Naive thymus-derived CD4-positive, alpha-beta T cell (primary cell): ENCODE measurements at regions of chr2 and their contacts with region 1.

Region 1: DNA sequence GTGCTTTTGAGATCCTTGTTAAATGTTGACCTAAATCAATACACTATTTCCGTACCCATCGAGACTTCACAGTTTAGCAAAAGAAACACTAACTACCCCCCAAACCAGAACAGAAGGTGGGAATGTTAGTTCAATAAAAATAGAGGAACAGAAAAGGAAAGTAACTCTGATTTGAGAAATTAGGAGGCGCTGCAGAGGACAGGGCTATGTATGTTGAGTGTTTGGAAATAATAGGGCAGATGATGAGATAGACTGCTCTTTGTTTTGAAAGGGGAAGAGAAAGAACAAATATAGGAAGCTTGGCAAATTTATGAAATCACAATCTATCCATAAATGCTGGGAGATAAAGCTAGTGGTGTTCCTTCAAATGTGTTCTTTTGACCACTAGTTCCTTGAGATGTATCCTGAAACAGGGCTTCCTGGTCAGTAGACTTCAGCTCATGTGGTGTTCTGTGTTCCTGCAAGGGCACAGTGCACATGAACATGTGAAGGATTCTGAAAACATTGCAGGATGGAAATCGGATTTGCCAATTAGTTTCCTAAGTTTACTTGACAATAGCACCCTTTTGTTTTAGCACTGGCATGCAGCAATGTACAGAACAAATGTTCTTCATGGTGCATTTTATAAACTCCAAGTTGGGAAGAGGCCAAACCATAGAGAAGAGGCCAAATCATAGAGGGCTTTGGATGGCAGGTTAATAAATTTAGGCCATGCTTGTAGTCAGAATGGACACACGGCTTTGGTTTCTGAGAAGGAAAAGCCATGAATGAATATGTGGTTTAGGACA is 39.8 kb downstream of the RHBDD1 start:
- DNase-seq: no peak
- ATAC-seq: peak; percentile 65
- H3K4me3 ChIP-seq: no peak overlapping the region
- H3K4me3 Mint-ChIP-seq: no peak overlapping the region
- H3K27ac ChIP-seq: no peak overlapping the region
- H3K27ac Mint-ChIP-seq: no peak overlapping the region
- H3K4me1 ChIP-seq: no peaks in the 10 kb centered on the region
- H3K4me1 Mint-ChIP-seq: peaks cover 4 to 16% (median 12%) of the 10 kb centered on the region in 7 donors
- H3K27me3 ChIP-seq: no peaks in the 10 kb centered on the region
- H3K27me3 Mint-ChIP-seq: no peaks in the 10 kb centered on the region

Region 2: GRCh38 chr2:226855766-226856165 is 19.9 kb before region 1 on chr2:
- CTCF ChIA-PET with region 1: no interaction called
- POLR2A ChIA-PET with region 1: no interaction called
- intact Hi-C with region 1: loop called in 1 of 2 experiments (anchors 2 kb)
- DNase-seq: no peak
- ATAC-seq: no peak
- H3K4me3 ChIP-seq: no peak overlapping the region
- H3K4me3 Mint-ChIP-seq: no peak overlapping the region
- H3K27ac ChIP-seq: no peak overlapping the region
- H3K27ac Mint-ChIP-seq: no peak overlapping the region
- H3K4me1 ChIP-seq: no peaks in the 10 kb centered on the region
- H3K4me1 Mint-ChIP-seq: peaks cover 7 to 35% (median 23%) of the 10 kb centered on the region in 7 donors
- H3K27me3 ChIP-seq: no peaks in the 10 kb centered on the region
- H3K27me3 Mint-ChIP-seq: no peaks in the 10 kb centered on the region